Right ventricle myocardium inferior (tissue), 1 donor: ENCODE measurements at regions of chr6 and their contacts with region 1.

Region 1: DNA sequence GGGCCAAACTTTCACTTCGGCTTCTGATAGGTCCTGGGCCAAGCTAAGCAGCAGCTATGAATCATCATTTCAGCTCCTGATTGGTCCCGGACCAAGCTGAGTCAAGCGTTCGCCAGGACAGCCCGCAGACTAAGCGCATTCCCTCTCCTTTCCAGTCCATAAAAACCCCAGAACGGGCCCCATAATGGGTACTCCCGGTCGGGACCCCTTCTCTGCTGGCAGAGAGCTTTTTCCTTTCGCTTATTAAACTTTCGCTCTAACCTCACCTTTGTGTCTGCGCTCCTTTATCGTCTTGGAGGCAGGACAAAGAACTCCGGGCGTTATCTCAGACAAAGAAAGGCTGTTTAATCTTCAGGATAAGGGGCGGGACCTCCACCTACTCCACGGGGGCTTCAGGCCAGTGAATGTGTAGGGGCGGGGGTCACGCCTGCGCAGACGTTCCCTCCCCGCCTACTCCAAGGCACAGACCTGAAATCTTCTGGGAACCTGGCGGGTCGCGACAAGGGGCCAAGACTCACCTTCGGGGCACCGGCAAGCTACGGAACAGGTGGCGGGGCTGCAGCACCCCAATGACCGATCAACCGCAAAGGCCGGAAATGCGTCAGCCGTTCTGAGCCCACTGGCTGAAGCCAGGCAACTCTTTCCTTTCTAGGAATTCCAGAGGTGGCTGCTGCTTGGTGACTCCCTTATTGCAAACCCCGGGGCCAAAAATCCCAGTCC is at the start of gene ZSCAN31:
- DNase-seq: peak; percentile 95
- ATAC-seq: peak; percentile 99
- total RNA-seq, gene ZSCAN31: 10.2 TPM

Region 2: GRCh38 chr6:28281288-28282064 is 54.2 kb before region 1 on chr6 and contains the start of gene PGBD1:
- intact Hi-C with region 1: loop called (anchors 5 kb)
- DNase-seq: peak; percentile 86
- ATAC-seq: peak; percentile 96
- total RNA-seq, gene PGBD1: 2.5 TPM

Region 3: DNA sequence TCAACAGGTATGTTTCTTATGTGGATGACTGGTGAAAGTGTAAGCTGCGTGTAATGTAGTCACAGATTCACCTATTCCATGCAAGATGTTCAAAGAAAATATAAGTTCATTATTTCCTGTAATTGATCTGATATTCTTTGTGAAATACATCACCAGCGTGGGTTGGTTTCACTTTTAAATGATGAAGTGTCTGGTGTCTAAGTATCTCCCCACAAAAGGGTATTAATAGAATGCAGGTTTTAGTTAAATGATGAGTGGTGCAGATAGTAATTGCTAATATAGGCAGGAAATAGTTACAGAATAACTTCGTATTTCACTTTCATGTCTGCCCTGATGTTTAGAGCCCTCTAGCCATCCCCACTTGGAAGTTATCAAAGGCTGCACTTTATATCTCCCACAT is 32.2 kb before region 1 on chr6:
- intact Hi-C with region 1: no loop called
- DNase-seq: no peak
- ATAC-seq: no peak

Region 4: GRCh38 chr6:28349892-28350737 is 14.4 kb after region 1 on chr6 and contains the start of gene ZKSCAN3:
- intact Hi-C with region 1: loop called (anchors 1 kb)
- DNase-seq: peak; percentile 92
- ATAC-seq: peak; percentile 96
- total RNA-seq, gene ZKSCAN3: 4.0 TPM